Activated B cell treated with CpG ODN at 0.5 μM for 24 hours (primary cell): ENCODE measurements at regions of chr3 and their contacts with region 1.

Region 1: DNA sequence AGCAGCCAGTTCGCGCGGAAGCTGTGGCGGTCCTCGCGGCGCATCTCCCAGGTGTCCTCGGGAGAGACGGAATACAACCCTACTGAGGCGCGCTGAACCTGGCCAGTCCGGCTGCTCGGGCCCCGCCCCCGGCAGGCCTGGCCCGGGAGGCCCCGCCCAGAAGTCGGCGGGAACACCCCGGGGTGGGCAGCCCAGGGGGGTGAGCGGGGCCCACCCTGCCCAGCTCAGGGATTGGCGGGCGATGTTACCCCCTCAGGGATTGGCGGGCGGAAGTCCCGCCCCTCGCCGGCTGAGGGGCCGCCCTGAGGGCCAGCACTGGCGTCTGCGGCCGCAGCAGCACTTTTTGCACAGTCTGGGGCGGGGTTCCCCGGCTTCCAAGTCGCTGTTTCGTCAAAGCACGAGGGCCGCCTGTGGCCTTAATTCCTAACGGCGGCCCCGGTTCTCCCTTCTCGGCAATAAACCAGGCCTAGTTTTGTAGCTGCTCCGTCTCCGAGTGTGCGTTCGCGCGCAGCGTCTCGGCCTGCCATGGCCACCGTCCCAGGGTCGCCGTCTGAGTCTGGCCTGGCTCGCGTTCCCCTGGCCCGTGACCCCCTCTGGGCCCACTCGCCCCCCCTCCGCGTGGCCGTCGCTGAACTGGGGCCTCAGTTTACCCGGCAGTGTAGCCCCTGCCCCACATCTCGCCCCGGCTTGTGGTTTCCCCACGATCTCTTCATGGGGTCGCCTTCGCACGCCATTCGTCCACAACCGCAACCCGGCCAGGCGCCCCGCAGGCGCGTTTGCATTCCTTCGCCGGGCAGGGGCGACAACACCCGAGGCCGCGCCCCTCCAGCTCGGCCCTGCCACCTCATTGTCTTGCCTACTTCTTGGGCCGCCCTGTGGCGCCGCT is 30.0 kb downstream of the NBEAL2 start:
- DNase-seq: peak; percentile 82
- ATAC-seq: peak; percentile 97
- H3K4me3 Mint-ChIP-seq: peak overlapping the region; percentile 81
- H3K27ac Mint-ChIP-seq: peak overlapping the region; percentile 73
- H3K4me1 Mint-ChIP-seq: peaks cover 13% of the 10 kb centered on the region
- H3K27me3 Mint-ChIP-seq: no peaks in the 10 kb centered on the region
- CTCF ChIP-seq: no peak

Region 2: DNA sequence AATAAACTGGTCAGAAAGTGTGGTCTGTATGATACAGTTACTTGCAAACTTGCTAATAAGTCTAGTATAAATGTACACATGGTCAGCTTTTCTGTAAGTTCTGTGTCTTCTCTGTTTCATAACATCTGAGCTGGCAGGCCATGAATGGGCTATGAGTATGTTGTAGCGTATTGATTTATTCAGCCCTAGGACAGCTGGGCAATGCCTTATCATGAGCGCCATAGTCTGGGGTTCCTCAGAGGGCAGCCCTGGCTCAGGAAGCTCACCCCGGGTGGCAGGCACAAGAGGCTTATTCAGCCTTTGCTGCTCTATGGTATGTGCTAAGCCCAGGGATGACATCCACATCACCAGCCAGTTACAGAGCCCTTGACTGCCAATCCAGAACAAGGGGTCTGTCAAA is 706.2 kb before region 1 on chr3:
- CTCF ChIA-PET with region 1: no interaction called
- POLR2A ChIA-PET with region 1: no interaction called
- intact Hi-C with region 1: no loop called
- DNase-seq: no peak
- ATAC-seq: no peak
- H3K4me3 Mint-ChIP-seq: no peak overlapping the region
- H3K27ac Mint-ChIP-seq: no peak overlapping the region
- H3K4me1 Mint-ChIP-seq: peaks cover 40% of the 10 kb centered on the region
- H3K27me3 Mint-ChIP-seq: no peaks in the 10 kb centered on the region
- CTCF ChIP-seq: no peak

Region 3: DNA sequence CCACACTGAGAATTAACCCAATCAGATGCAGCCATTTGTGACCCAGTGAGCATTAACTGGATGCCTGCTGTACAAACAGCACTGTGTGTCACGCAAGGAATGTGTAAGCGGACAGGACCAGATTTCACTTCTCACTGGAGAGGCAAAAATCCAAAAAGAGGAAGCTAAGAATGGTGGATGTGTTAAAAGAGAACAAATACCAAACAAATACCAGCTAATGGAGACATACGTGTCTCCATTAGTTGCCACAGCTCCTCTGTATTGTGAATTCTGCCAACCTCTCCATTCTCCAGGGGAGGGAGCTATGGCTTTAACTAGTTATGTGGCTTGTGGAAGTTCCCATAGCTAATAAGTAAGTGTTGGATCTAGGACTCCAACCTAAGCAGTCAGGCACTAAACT is 547.4 kb before region 1 on chr3:
- CTCF ChIA-PET with region 1: no interaction called
- POLR2A ChIA-PET with region 1: no interaction called
- intact Hi-C with region 1: no loop called
- DNase-seq: no peak
- ATAC-seq: no peak
- H3K4me3 Mint-ChIP-seq: no peak overlapping the region
- H3K27ac Mint-ChIP-seq: no peak overlapping the region
- H3K4me1 Mint-ChIP-seq: no peaks in the 10 kb centered on the region
- H3K27me3 Mint-ChIP-seq: peaks cover 47% of the 10 kb centered on the region
- CTCF ChIP-seq: no peak

Region 4: DNA sequence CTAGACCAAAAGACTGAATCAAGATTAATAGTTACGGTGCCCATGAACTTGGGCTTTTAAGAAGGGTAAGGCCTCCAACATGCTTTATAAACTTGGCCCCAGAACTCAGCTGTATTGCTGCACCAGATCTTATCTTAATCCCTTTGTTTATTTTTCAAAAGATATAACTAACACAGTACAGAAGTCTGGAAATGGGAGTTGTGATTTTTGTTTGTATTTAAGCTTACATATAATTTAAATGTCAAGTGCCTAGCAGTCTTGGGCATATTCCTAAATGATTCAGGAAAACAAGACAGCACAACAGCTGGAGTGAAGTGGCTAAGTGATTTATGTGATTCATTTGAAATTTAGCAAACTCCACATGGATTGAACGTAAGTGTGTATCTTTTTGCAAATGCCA is 26.2 kb after region 1 on chr3:
- CTCF ChIA-PET with region 1: interaction called, 5 read pairs
- POLR2A ChIA-PET with region 1: no interaction called
- intact Hi-C with region 1: loop called (anchors 2 kb)
- DNase-seq: no peak
- ATAC-seq: no peak
- H3K4me3 Mint-ChIP-seq: no peak overlapping the region
- H3K27ac Mint-ChIP-seq: no peak overlapping the region
- H3K4me1 Mint-ChIP-seq: peaks cover 30% of the 10 kb centered on the region
- H3K27me3 Mint-ChIP-seq: no peaks in the 10 kb centered on the region
- CTCF ChIP-seq: no peak

Region 5: DNA sequence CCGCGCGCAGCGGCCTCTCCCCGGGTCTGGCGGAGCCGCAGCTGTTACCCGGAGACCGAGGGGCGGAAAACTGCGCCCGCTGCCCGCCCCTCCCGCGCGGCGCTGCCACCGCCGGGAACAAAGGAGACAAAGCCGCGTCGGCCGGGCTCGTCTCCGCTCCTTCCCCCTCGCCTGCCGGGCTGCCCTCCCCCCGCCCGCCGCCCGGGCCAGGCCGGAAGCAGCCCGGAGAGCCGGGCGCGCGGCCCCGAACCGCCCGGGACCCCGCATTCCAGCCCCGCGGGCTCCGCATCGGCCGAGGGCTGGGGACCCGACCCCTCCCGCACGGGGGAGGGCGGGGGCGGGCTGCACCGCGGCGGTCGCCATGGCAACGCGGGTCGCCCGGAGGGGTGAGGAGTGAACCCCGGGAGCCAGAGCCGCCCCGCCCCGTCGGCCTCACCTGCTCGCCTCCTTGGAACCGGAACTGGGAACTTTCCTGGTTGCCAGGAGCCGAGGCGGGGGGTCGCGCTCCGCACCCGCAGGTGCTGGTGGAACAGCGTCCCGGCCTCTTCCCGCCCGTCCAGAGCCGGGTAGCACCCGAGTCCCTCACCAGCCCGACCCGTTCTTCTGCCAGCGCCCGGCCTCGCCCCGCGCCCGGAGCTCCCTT is 1420.0 kb after region 1 on chr3:
- CTCF ChIA-PET with region 1: no interaction called
- POLR2A ChIA-PET with region 1: no interaction called
- intact Hi-C with region 1: no loop called
- DNase-seq: peak; percentile 51
- ATAC-seq: peak; percentile 76
- H3K4me3 Mint-ChIP-seq: peak overlapping the region; percentile 82
- H3K27ac Mint-ChIP-seq: peak overlapping the region; percentile 61
- H3K4me1 Mint-ChIP-seq: peaks cover 5% of the 10 kb centered on the region
- H3K27me3 Mint-ChIP-seq: peaks cover 9% of the 10 kb centered on the region
- CTCF ChIP-seq: no peak